ENCODE measurements at regions of chrX and their contacts with region 1.

Region 1: GRCh38 chrX:13254076-13254785 is 65.6 kb downstream of the ATXN3L start:
- DNase-seq: peak; percentile 56
- ATAC-seq: peak; percentile 59
- H3K4me3 ChIP-seq: no peak overlapping the region; the same call in 1 of the 2 replicates
- H3K27ac ChIP-seq: peak overlapping the region; percentile 92
- H3K4me1 ChIP-seq: peaks cover 58% of the 10 kb centered on the region
- H3K27me3 ChIP-seq: no peaks in the 10 kb centered on the region
- CTCF ChIP-seq: peak; percentile 33 to 52 (median 41); a peak in 4 of 6 replicates
- EP300 ChIP-seq: no peak
- POLR2A ChIP-seq: no peak
- RAD21 ChIP-seq: peak; percentile 75

Region 2: DNA sequence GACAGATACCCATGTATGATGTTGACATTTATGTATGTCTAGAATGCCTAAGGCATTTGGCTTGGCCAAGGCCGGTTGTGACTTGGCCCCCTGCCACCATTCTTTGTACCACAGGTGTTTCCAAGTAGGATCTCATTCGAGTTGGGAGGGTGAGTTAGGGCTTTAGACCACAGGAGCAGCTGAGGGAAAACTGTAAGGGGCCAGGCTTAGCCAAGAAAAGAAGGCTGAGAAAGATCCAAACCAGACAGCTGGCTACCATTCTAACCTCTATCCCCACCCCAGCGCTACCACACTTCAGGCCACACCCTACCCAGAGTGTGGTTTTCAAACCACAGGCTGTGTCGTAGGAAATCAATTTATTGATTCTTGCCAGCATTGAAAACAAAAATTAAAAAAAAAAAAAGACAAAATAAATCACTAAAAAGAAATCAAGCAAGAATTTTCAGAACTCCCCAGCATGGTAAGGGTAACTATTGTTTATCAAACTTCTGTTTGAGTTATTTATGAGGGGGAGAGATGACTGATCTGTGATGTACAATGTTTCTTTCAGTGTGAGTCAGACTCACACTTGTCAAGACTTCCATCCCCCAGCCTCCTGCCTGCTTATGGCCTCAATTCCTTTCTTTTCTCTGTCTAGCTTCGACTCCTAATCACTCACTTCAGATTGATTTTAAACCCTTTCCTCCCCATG is 269.5 kb before region 1 on chrX:
- CTCF ChIA-PET with region 1: interaction called, 5 read pairs
- POLR2A ChIA-PET with region 1: no interaction called
- RAD21 ChIA-PET with region 1: interaction called, 12 read pairs
- SMC1A ChIA-PET with region 1: interaction called, 7 read pairs
- in situ Hi-C with region 1: no loop called
- intact Hi-C with region 1: no loop called
- DNase-seq: no peak
- ATAC-seq: peak; percentile 74
- H3K4me3 ChIP-seq: peak overlapping the region; percentile 26; the same call in 1 of the 2 replicates
- H3K27ac ChIP-seq: peak overlapping the region; percentile 98
- H3K4me1 ChIP-seq: peaks cover 68% of the 10 kb centered on the region
- H3K27me3 ChIP-seq: no peaks in the 10 kb centered on the region
- CTCF ChIP-seq: no peak
- EP300 ChIP-seq: peak; percentile 68 to 87; a peak in 3 of 4 replicates
- POLR2A ChIP-seq: no peak
- RAD21 ChIP-seq: no peak; the same call in 1 of the 2 replicates

Region 3: GRCh38 chrX:13051529-13052172 is 202.6 kb before region 1 on chrX:
- CTCF ChIA-PET with region 1: interaction called, 3 read pairs
- POLR2A ChIA-PET with region 1: interaction called, 3 read pairs
- RAD21 ChIA-PET with region 1: interaction called, 6 read pairs
- SMC1A ChIA-PET with region 1: interaction called, 13 read pairs
- in situ Hi-C with region 1: no loop called
- intact Hi-C with region 1: no loop called
- DNase-seq: peak; percentile 71
- ATAC-seq: peak; percentile 71
- H3K4me3 ChIP-seq: no peak overlapping the region
- H3K27ac ChIP-seq: peak overlapping the region; percentile 69
- H3K4me1 ChIP-seq: peaks cover 48% of the 10 kb centered on the region
- H3K27me3 ChIP-seq: no peaks in the 10 kb centered on the region
- CTCF ChIP-seq: no peak
- EP300 ChIP-seq: peak; percentile 85 to 95; a peak in 3 of 4 replicates
- POLR2A ChIP-seq: no peak
- RAD21 ChIP-seq: no peak

Region 4: DNA sequence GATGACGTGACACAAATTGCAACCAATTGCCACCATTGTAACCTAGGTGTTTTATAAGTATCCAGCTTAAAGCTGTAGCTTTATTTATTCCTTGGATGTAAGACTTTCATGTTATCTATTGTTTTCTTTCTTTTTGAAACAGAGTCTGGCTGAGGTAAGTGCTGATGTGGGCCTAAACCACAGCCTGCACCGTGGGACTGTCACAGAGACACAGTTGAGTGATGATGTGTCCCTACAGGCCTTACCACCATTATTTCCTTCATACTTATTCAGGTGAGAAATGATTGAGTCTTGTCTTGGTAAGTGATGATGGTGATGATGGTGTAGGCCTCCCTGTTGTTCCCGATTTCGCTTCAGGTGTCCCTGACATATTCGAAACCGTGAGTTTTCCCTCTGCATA is 57.3 kb after region 1 on chrX:
- CTCF ChIA-PET with region 1: no interaction called
- POLR2A ChIA-PET with region 1: no interaction called
- RAD21 ChIA-PET with region 1: no interaction called
- SMC1A ChIA-PET with region 1: no interaction called
- in situ Hi-C with region 1: no loop called
- intact Hi-C with region 1: no loop called
- DNase-seq: no peak
- ATAC-seq: peak; percentile 41; the same call in 2 of the 3 replicates
- H3K4me3 ChIP-seq: no peak overlapping the region
- H3K27ac ChIP-seq: no peak overlapping the region
- H3K4me1 ChIP-seq: no peaks in the 10 kb centered on the region
- H3K27me3 ChIP-seq: no peaks in the 10 kb centered on the region; a peak in 1 of 4 replicates
- CTCF ChIP-seq: no peak
- EP300 ChIP-seq: no peak
- POLR2A ChIP-seq: no peak
- RAD21 ChIP-seq: no peak

Region 5: GRCh38 chrX:13341491-13342101 is 87.4 kb after region 1 on chrX:
- CTCF ChIA-PET with region 1: interaction called, 4 read pairs
- POLR2A ChIA-PET with region 1: interaction called, 3 read pairs
- RAD21 ChIA-PET with region 1: interaction called, 8 read pairs
- SMC1A ChIA-PET with region 1: interaction called, 28 read pairs
- in situ Hi-C with region 1: no loop called
- intact Hi-C with region 1: loop called (anchors 2 kb)
- DNase-seq: no peak
- ATAC-seq: peak; percentile 48
- H3K4me3 ChIP-seq: no peak overlapping the region
- H3K27ac ChIP-seq: no peak overlapping the region
- H3K4me1 ChIP-seq: peaks cover 3% of the 10 kb centered on the region; the same call in 1 of the 2 replicates
- H3K27me3 ChIP-seq: no peaks in the 10 kb centered on the region
- CTCF ChIP-seq: peak in 1 of 3 experiments; percentile 10; a peak in 1 of 6 replicates
- EP300 ChIP-seq: no peak
- POLR2A ChIP-seq: no peak
- RAD21 ChIP-seq: peak; percentile 42

Region 6: GRCh38 chrX:13473442-13474163 is 219.4 kb after region 1 on chrX:
- CTCF ChIA-PET with region 1: interaction called, 23 read pairs
- POLR2A ChIA-PET with region 1: no interaction called
- RAD21 ChIA-PET with region 1: interaction called, 48 read pairs
- SMC1A ChIA-PET with region 1: interaction called, 46 read pairs
- in situ Hi-C with region 1: no loop called
- intact Hi-C with region 1: no loop called
- DNase-seq: peak; percentile 52
- ATAC-seq: peak; percentile 92
- H3K4me3 ChIP-seq: peak overlapping the region; percentile 52; the same call in 1 of the 2 replicates
- H3K27ac ChIP-seq: peak overlapping the region; percentile 88
- H3K4me1 ChIP-seq: no peaks in the 10 kb centered on the region
- H3K27me3 ChIP-seq: no peaks in the 10 kb centered on the region
- CTCF ChIP-seq: no peak
- EP300 ChIP-seq: peak; percentile 51 to 81; a peak in 3 of 4 replicates
- POLR2A ChIP-seq: no peak
- RAD21 ChIP-seq: no peak